ENCODE measurements at regions of chr9 and their contacts with region 1.

Region 1: GRCh38 chr9:75265525-75265972 is 177.2 kb downstream of the OSTF1 start:
- DNase-seq: peak; percentile 7 to 70
- H3K4me3 ChIP-seq: no peak overlapping the region
- H3K27ac ChIP-seq: no peak overlapping the region
- H3K4me1 ChIP-seq: no peaks in the 10 kb centered on the region
- H3K27me3 ChIP-seq: no peaks in the 10 kb centered on the region
- CTCF ChIP-seq: peak in 2 of 3 experiments; percentile 60 to 69; a peak in 3 of 4 replicates
- EP300 ChIP-seq: no peak
- POLR2A ChIP-seq: no peak
- RAD21 ChIP-seq: peak; percentile 85 to 87

Region 2: DNA sequence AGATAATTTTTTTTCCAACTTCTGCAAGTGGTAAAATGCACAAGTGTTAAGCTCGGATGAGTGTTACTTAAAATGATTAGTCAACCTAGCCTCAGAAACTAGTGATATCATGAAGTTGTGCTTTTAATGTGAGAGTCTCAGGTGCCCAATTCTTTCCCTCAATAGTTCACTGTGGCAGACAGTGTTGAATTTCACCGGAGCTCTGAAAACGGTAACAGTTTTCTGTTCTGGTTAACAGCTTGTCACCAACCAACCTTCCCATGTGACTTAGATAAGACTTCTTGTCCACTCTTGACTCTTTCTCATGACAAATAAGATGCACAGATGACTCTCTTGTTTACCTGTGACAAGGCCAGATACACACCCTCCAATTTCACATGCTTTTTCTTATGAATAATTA is 51.8 kb before region 1 on chr9:
- CTCF ChIA-PET with region 1: no interaction called
- POLR2A ChIA-PET with region 1: no interaction called
- DNase-seq: no peak
- H3K4me3 ChIP-seq: no peak overlapping the region
- H3K27ac ChIP-seq: no peak overlapping the region
- H3K4me1 ChIP-seq: no peaks in the 10 kb centered on the region
- H3K27me3 ChIP-seq: no peaks in the 10 kb centered on the region
- CTCF ChIP-seq: no peak
- EP300 ChIP-seq: no peak
- POLR2A ChIP-seq: no peak
- RAD21 ChIP-seq: no peak

Region 3: DNA sequence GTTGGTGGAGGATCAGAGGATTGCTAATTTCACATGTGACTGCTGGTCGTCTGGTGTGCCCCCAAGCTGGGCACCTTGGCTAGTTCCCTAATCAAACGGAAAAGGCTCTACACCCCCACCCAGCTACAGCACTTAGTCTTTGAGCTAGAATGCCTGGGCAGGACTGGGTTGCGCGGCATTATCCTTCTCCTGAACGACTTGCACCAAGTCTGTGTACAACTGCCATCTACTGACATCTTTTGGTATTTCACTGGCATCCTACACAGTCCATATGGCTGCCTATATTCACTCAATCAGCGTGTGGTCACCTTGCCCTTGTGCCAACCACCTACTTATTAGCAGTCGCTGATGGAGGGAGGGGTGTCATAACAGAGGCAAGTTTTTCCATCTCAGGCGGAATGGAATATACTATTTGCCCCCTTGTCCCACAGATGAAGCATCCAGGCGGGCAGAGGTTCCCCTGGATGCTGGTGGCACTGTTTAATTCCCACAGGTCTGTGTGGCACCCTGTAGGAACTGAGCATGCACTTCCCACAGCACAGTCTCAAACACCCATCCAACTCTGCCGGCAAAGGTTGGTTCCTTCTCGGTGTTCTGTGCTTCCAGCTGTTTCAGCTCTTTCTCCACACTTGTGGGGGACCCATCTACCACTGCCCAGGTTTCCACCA is 27.1 kb before region 1 on chr9:
- CTCF ChIA-PET with region 1: interaction called, 22 read pairs
- POLR2A ChIA-PET with region 1: no interaction called
- DNase-seq: peak; percentile 33 to 51
- H3K4me3 ChIP-seq: no peak overlapping the region
- H3K27ac ChIP-seq: no peak overlapping the region
- H3K4me1 ChIP-seq: no peaks in the 10 kb centered on the region
- H3K27me3 ChIP-seq: no peaks in the 10 kb centered on the region
- CTCF ChIP-seq: peak; percentile 9 to 80 (median 63)
- EP300 ChIP-seq: no peak
- POLR2A ChIP-seq: no peak
- RAD21 ChIP-seq: peak; percentile 72 to 78